Sigmoid colon (tissue), 7 donors: ENCODE measurements at regions of chr14 and their contacts with region 1.

Region 1: DNA sequence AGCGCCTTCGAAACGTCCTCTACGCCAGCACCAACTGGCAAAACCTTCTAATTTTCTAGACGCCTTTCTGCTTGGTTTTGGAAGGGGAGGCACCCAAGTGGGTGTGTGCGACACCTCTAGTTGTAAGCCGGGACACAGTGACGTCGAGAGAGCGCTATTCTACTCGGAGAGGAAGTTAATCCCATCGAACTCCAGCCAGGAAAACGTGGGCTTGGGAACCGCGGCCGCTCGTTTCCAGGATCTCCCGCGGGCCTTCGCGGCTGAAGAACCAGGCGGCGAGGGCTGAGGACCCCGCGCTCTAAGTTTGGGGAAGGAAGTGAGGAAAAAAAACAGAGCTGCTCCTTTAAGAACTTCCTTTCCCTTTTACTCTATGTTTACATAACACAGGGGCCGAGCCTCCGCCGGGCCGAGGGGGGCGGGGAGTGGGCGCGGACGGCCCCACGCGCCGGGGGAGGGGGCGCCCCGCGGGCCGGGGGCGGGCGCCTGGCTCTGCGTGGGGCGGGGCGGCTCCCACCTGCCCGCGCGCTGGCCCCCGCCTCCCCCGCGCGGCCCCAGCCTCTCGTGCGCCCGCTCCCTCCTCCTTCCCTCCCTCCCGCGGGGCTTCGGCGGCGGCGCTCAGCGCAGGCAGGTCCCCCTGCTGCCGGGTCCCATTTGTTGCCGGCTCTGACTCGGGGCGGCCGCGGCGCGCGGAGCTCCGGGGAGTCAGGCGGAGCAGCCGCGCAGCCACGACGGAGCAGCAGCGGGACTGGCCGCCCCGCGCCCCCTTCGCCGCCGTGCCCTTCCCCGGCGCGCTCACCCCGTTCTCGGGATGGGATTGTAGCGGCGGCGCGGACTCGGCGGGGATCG is at the start of gene PELI2:
- DNase-seq: peak; percentile 91
- H3K4me3 ChIP-seq: peak within 1 kb of the TSS; percentile 71 to 97 (median 78)
- H3K27ac ChIP-seq: peak within 1 kb of the TSS; percentile 82 to 97 (median 92)
- H3K4me1 ChIP-seq: peaks cover 0 to 36% (median 25%) of the 10 kb centered on the region in 4 donors
- H3K27me3 ChIP-seq: no peaks in the 10 kb centered on the region
- CTCF ChIP-seq: peak in 1 of 4 experiments; percentile 28
- EP300 ChIP-seq: no peak
- POLR2A ChIP-seq: no peak
- total RNA-seq, gene PELI2: 26.3 to 34.3 (median 27.2) TPM

Region 2: DNA sequence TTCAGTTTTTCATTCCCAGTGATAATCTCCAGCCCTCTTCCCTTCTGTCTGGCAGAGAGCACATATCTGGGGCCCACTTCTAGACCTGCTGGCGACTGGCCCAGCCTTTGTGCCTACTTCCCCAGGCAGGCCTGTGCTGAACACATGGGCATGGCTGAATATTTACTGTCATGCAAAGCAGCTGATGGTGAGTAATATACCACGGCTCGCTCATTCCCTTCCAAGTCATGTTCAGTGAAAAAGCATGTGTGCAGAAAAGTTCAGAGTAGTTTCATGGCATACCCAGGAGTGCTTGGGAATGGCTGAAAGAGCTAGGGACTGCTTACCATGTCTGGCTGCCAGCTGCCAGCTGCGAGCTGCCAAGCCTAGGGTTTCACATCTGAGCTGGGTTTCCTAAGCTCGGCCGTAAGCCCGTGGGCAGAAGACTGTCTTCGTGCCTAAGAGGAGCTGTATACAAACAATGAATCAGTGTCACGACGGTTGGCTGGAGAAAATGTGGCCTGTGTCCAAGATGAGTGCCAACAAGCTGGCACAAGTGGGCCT is 179.7 kb before region 1 on chr14:
- intact Hi-C with region 1: loop called (anchors 2 kb)
- DNase-seq: peak; percentile 82
- H3K4me3 ChIP-seq: no peak overlapping the region
- H3K27ac ChIP-seq: peak overlapping the region in 3 of 4 donors; percentile 30 to 53 (median 51)
- H3K4me1 ChIP-seq: peaks cover 0 to 15% (median 3%) of the 10 kb centered on the region in 4 donors
- H3K27me3 ChIP-seq: no peaks in the 10 kb centered on the region
- CTCF ChIP-seq: no peak
- EP300 ChIP-seq: no peak
- POLR2A ChIP-seq: no peak

Region 3: DNA sequence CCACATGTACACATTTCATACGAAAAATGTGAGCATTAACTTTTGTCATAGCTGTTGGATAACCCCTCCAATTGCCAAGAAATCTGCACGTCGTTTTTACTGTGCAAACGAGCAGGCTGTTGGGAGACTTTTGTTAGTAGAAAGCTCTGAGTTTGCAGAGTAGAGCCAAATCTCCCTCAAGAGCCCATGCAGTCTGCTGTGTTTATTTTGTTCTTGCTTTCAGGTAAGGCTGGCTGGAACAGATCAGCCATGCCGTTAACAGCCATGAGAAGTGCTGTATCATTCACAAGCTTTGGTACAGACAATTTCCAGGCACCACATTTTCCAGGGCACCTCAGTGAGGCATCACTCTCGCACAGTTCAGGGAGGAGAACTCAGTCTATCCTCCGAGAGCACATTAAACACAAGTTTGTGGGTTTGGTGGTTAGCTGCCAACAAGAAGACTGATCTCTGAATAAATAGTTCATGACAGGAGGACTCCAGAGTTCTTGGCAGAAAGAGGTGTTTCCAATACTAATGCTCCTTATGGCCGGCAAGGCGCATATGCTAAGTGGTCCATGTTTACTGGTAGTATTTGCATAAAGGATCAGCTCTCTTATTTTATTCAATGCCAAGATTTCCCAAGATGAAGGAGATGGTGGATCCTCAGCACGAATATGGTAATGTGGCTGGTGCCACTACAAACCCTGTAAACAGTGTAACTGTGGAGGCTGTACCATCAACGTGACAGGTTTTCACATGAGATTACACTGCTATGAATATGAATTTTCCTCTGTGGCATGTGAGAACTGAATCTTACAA is 30.1 kb before region 1 on chr14:
- intact Hi-C with region 1: loop called (anchors 2 kb)
- DNase-seq: peak; percentile 74
- H3K4me3 ChIP-seq: no peak overlapping the region
- H3K27ac ChIP-seq: peak overlapping the region in 3 of 4 donors; percentile 49 to 65 (median 60)
- H3K4me1 ChIP-seq: peaks cover 0 to 21% (median 19%) of the 10 kb centered on the region in 4 donors
- H3K27me3 ChIP-seq: no peaks in the 10 kb centered on the region
- CTCF ChIP-seq: no peak
- EP300 ChIP-seq: no peak
- POLR2A ChIP-seq: no peak

Region 4: DNA sequence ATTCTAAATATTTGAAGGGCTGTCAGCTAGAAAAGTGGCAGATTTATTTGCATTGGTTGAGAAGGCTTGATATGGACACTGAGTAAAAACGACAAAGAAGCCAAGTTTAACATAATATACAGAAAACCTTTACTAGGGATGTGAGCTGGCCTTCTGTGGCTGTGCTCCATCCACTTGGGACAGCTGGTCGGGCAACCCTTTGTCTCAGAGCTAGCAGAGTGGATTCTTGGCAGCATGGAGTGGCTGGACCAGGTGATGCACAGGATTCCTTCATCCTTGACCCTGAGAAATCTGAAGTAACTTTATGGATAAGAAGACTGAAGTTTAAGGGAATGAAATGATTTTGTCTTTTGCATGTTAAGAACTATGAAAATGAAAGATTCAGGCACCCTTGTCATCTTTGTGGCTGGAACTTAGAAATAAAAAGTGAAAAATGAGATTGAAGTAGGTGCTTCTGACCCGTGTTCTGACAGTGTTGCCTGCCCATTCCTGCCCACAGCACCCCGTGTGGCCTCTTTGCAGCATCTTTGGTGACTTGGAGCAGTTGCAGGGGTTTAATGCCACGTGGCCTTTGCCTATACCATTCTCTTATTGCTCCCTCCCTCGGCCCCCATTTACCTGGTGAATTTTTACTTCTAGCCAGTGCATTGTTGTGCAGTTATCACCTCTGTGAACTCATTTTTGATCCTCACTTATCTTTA is 32.8 kb after region 1 on chr14:
- intact Hi-C with region 1: no loop called
- DNase-seq: no peak
- H3K4me3 ChIP-seq: no peak overlapping the region
- H3K27ac ChIP-seq: no peak overlapping the region
- H3K4me1 ChIP-seq: peaks cover 0 to 59% (median 54%) of the 10 kb centered on the region in 4 donors
- H3K27me3 ChIP-seq: no peaks in the 10 kb centered on the region
- CTCF ChIP-seq: no peak
- EP300 ChIP-seq: no peak
- POLR2A ChIP-seq: no peak

Region 5: DNA sequence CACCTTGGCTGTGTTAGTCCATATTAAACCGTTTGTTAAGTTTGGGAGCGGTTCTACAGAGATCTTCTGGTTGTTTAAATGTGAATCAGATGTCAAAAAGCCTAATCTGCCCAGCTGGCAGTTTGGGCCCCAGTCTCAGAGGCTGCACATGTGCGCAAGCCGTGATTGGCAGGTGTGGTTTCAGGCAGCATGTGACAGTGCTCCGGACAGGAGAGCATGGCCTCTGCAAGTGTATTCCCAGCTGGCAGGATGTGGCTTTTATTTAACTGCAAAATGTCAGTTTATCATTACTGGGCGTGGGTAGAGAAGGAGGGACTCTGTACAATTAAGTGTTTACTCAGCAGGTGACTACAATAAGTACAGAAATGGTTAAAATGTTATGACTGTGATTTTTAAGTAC is 77.7 kb after region 1 on chr14:
- intact Hi-C with region 1: loop called (anchors 5 kb)
- DNase-seq: no peak
- H3K4me3 ChIP-seq: no peak overlapping the region
- H3K27ac ChIP-seq: peak overlapping the region; percentile 15 to 42 (median 37)
- H3K4me1 ChIP-seq: peaks cover 0 to 67% (median 32%) of the 10 kb centered on the region in 4 donors
- H3K27me3 ChIP-seq: no peaks in the 10 kb centered on the region
- CTCF ChIP-seq: no peak
- EP300 ChIP-seq: no peak
- POLR2A ChIP-seq: no peak

Region 6: DNA sequence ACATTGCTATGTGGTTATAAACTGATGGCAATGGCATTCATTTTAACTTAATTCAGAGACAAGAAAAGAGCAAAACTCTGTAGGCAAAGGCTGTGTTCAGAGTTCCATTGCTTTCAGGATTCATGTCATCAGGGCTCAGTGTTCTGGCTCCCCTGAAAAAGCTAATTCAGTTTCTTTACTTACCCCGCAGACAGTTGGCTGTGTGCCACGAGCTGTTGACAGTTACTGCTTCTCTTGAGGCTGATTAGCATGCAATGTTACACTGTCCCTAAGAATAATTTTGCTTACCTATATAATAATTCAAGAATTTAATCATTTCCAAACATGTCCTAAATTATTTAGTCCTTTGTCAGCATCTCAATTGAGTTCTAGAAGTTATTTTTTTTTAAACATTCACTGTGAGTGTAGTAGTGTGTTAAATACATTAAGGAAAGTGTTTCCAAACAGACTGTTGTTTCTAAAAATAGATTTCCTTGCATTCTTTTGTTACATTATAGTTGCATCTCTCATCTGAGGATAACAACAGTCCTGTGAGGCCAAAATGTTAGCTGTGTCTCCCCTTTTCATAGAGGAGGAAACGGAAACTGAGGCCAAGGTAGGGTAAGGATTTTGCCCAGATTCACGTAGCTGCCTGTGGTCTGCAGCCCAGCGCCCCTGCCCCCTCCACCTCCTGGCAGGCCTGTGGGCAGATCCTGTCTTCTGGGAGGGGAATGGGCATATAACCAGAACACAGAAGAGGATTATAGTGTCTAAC is 98.8 kb after region 1 on chr14:
- intact Hi-C with region 1: loop called (anchors 5 kb)
- DNase-seq: no peak
- H3K4me3 ChIP-seq: no peak overlapping the region
- H3K27ac ChIP-seq: no peak overlapping the region
- H3K4me1 ChIP-seq: peaks cover 0 to 66% (median 53%) of the 10 kb centered on the region in 4 donors
- H3K27me3 ChIP-seq: no peaks in the 10 kb centered on the region
- CTCF ChIP-seq: no peak
- EP300 ChIP-seq: no peak
- POLR2A ChIP-seq: no peak

Region 7: GRCh38 chr14:56339855-56340701 is 222.1 kb after region 1 on chr14:
- intact Hi-C with region 1: loop called (anchors 2 kb)
- DNase-seq: peak; percentile 82
- H3K4me3 ChIP-seq: no peak overlapping the region
- H3K27ac ChIP-seq: no peak overlapping the region
- H3K4me1 ChIP-seq: peaks cover 0 to 29% (median 26%) of the 10 kb centered on the region in 4 donors
- H3K27me3 ChIP-seq: no peaks in the 10 kb centered on the region
- CTCF ChIP-seq: peak; percentile 60 to 76 (median 70)
- EP300 ChIP-seq: no peak
- POLR2A ChIP-seq: no peak